ENCODE measurements at regions of chr2 and their contacts with region 1.

Region 1: GRCh38 chr2:121088251-121089165 is 196.5 kb downstream of the TFCP2L1 start:
- DNase-seq: peak in 3 of 5 donors; percentile 63 to 84 (median 64)
- H3K4me3 ChIP-seq: no peak overlapping the region
- H3K27ac ChIP-seq: no peak overlapping the region
- H3K4me1 ChIP-seq: no peaks in the 10 kb centered on the region
- H3K27me3 ChIP-seq: peaks cover 1% of the 10 kb centered on the region
- CTCF ChIP-seq: no peak

Region 2: GRCh38 chr2:120771111-120771947 is 317.2 kb before region 1 on chr2:
- intact Hi-C with region 1: no loop called
- DNase-seq: peak in 4 of 5 donors; percentile 47 to 93 (median 65)
- H3K4me3 ChIP-seq: no peak overlapping the region
- H3K27ac ChIP-seq: peak overlapping the region; percentile 26 to 75
- H3K4me1 ChIP-seq: peaks cover 0 to 4% (median 3%) of the 10 kb centered on the region in 3 donors
- H3K27me3 ChIP-seq: no peaks in the 10 kb centered on the region
- CTCF ChIP-seq: no peak

Region 3: DNA sequence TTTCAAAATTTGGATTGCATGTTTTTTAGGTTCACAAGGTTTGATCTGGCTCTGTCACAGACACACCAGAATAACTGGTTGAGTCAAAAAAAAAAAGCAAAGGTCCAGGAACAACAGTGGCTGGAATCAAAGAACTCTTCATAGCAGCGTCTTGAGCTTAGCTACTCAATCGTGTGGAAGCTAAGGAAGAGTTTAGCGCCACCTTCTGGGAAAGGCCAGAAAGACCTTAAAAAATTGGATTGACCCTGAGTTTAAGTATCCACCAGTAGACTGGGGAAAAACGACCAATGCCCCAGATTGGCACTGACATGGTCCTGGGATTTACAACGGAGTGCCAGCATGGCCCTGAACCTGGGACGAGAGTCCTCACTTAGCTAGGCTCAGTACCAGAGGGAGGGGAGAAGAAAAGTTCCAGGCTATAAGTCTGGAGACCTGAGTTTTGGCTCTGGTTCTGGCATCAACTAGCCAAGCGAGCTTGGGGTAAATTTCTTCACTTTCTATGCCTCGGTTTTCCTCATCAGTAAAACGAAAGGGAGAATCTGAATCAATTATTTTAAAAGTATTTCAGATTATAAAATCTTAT is 267.6 kb after region 1 on chr2:
- intact Hi-C with region 1: loop called (anchors 5 kb)
- DNase-seq: peak in 3 of 5 donors; percentile 66 to 89 (median 87)
- H3K4me3 ChIP-seq: no peak overlapping the region
- H3K27ac ChIP-seq: no peak overlapping the region
- H3K4me1 ChIP-seq: peaks cover 0 to 15% (median 0%) of the 10 kb centered on the region in 3 donors
- H3K27me3 ChIP-seq: no peaks in the 10 kb centered on the region
- CTCF ChIP-seq: peak; percentile 68